Breast epithelium (tissue), 4 donors: ENCODE measurements at regions of chr12 and their contacts with region 1.

Region 1: DNA sequence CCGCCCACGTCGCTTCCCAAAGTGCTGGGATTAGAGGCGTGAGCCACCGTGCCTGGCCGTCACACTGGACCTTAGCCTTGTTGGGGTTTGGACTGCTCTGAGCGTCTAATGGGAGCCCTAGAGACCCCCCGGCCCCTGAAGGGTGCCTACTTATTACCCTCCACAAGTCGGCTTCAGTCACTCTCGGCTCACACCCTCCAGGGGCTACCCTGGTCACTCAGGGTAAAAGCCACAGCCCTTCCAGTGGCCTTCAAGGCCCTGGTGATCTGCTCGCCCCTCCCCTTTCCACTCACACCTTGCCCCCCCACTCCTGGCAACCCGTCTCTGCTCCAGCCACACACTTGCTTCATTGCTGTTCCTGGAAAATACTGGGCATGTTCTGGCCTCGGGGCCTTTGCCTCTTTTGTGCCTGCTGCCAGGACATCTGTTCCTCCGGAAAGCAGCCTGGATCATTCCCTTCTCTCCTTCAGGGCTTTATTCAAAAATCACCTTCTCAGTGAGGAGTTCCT is 3.6 kb upstream of the MORN3 start:
- DNase-seq: peak; percentile 89 to 93
- H3K4me3 ChIP-seq: peak overlapping the region; percentile 45 to 62 (median 52)
- H3K27ac ChIP-seq: peak overlapping the region; percentile 76 to 94
- H3K4me1 ChIP-seq: peaks cover 0 to 9% of the 10 kb centered on the region in 2 donors
- H3K27me3 ChIP-seq: no peaks in the 10 kb centered on the region
- CTCF ChIP-seq: no peak
- POLR2A ChIP-seq: no peak

Region 2: GRCh38 chr12:120620624-120621023 is 1052.4 kb before region 1 on chr12:
- intact Hi-C with region 1: no loop called
- DNase-seq: no peak
- H3K4me3 ChIP-seq: no peak overlapping the region
- H3K27ac ChIP-seq: no peak overlapping the region
- H3K4me1 ChIP-seq: no peaks in the 10 kb centered on the region
- H3K27me3 ChIP-seq: peaks cover 0 to 4% of the 10 kb centered on the region in 2 donors
- CTCF ChIP-seq: no peak
- POLR2A ChIP-seq: no peak

Region 3: GRCh38 chr12:121550974-121551634 is 122.0 kb before region 1 on chr12:
- intact Hi-C with region 1: loop called (anchors 10 kb)
- DNase-seq: no peak
- H3K4me3 ChIP-seq: no peak overlapping the region
- H3K27ac ChIP-seq: no peak overlapping the region
- H3K4me1 ChIP-seq: no peaks in the 10 kb centered on the region
- H3K27me3 ChIP-seq: no peaks in the 10 kb centered on the region
- CTCF ChIP-seq: no peak
- POLR2A ChIP-seq: no peak

Region 4: GRCh38 chr12:121637231-121637914 is 35.7 kb before region 1 on chr12:
- intact Hi-C with region 1: no loop called
- DNase-seq: no peak
- H3K4me3 ChIP-seq: no peak overlapping the region
- H3K27ac ChIP-seq: peak overlapping the region in 1 of 2 donors; percentile 10
- H3K4me1 ChIP-seq: no peaks in the 10 kb centered on the region
- H3K27me3 ChIP-seq: no peaks in the 10 kb centered on the region
- CTCF ChIP-seq: no peak
- POLR2A ChIP-seq: no peak

Region 5: GRCh38 chr12:121712461-121713256 is 39.6 kb after region 1 on chr12 and contains the start of gene TMEM120B:
- intact Hi-C with region 1: no loop called
- DNase-seq: peak; percentile 73 to 83
- H3K4me3 ChIP-seq: peak within 1 kb of the TSS; percentile 86 to 95 (median 90)
- H3K27ac ChIP-seq: peak within 1 kb of the TSS; percentile 74 to 80
- H3K4me1 ChIP-seq: peaks cover 0 to 5% of the 10 kb centered on the region in 2 donors
- H3K27me3 ChIP-seq: no peaks in the 10 kb centered on the region
- CTCF ChIP-seq: peak in 1 of 3 donors; percentile 9
- POLR2A ChIP-seq: peak; percentile 60
- total RNA-seq, gene TMEM120B: 5.4 to 8.2 (median 6.1) TPM